ENCODE measurements at regions of chr1 and their contacts with region 1.

Region 1: GRCh38 chr1:111507411-111508201 is 4.2 kb upstream of the ADORA3 start:
- DNase-seq: peak; percentile 32
- H3K4me3 ChIP-seq: peak overlapping the region; percentile 41
- H3K27ac ChIP-seq: peak overlapping the region; percentile 91
- H3K27me3 ChIP-seq: peaks cover 4% of the 10 kb centered on the region
- CTCF ChIP-seq: peak; percentile 28; the same call in 1 of the 2 replicates

Region 2: DNA sequence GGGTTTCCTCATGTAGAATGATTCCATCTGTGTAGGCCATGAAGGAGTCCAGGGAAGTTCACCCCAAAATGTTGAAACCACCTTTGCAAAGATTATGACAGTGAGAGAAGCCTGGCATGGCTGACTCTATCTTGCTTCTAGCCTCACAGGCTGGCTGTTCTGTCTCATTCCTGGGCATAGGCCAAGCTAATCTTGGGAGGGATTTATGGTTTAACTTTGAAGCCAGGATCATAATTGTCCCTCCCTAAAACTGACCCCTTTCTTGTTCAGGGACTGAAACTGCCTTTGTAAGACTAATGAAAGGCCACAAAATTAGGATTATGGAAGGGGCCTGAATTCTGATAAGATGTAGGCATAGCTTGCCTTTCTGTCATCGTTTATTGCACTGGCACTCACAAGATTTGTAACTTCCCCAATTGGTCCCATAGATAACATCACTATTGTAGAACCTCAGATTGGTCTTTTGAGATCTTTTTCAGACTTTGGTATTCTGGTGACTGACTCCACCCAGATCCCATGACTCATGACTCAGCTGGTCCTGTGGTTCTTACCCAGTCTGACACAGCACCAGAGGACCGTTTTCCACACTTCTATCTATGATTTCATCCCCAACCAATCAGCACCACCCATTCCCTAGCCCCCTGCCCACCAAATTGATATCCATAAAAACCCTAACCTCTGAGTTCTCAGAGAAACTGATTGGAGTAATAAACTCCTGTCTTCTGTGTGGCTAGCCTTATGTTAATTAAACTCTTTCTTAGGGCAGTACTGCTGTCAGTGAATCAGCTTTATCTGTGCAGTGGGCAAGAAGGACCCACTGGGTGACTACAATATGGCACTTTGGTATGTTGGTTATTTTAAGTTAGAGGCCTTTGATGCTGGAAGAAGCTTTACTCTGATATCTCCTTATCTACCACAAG is 1086.5 kb before region 1 on chr1:
- CTCF ChIA-PET with region 1: no interaction called
- POLR2A ChIA-PET with region 1: no interaction called
- DNase-seq: no peak
- H3K4me3 ChIP-seq: no peak overlapping the region
- H3K27ac ChIP-seq: no peak overlapping the region
- H3K27me3 ChIP-seq: peaks cover 26% of the 10 kb centered on the region
- CTCF ChIP-seq: no peak

Region 3: DNA sequence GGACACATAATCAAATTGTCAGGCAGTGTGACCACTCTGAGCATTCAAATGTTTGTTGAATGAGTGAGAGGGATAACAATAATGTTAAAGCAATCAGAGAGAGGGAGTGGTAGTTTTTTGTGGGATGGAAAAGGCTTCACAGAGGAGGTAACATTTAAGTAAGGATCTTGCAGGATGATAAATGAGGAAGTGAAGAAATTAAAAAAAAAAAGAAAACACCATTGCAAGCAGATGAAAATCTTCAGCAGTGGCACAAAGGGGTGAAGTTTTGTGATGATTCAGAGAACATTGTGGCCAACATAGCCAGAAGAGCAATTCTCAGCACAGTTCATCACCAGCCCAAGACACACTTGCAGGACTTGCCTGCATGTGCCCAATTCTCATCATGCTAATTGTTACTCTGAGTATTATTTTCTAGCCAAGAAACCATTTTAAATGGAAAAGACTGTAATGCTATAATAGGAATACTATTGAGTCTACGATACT is 115.1 kb before region 1 on chr1:
- CTCF ChIA-PET with region 1: no interaction called
- POLR2A ChIA-PET with region 1: no interaction called
- DNase-seq: no peak
- H3K4me3 ChIP-seq: no peak overlapping the region
- H3K27ac ChIP-seq: no peak overlapping the region
- H3K27me3 ChIP-seq: peaks cover 8% of the 10 kb centered on the region
- CTCF ChIP-seq: no peak

Region 4: DNA sequence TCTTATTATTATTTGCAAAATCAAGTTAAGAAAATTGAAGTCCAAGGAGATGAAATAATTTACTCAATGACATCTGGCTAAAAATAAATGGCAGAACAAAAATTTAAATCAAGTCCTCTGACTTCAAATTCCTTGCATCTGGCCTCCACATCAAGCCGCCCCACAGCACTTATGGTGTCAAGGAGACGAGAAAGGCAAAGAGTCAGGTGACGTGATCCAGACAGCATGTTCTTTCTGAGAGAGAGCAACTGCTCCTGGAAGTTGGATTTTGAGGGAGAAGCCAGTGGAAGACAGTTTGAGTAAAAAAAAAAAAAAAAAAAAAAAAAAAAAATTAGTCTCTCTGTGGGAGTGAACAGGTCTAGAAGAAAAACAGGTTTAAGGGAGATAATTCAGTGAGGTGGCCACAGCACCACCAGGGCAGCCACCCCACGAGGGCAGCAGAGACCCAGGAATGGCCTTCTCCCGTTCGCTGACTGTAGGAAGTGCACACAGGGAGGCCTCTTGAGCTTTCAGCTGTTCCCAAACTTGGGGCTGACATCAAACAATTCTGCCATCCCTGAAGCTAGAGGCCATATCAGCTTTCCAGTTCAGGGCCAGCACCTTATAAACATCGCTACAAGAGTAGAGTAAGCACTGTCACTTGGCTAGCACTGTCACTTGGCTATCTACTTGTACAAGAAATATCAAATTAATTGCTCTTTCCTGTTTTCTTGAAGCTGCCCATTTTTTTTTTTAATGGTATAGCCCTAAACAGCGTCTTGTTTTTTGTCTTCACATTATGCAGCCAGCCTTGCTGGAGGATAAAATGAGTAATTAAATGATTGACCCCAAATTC is 26.0 kb before region 1 on chr1:
- CTCF ChIA-PET with region 1: interaction called, 59 read pairs
- POLR2A ChIA-PET with region 1: interaction called, 6 read pairs
- DNase-seq: peak; percentile 29
- H3K4me3 ChIP-seq: no peak overlapping the region
- H3K27ac ChIP-seq: no peak overlapping the region
- H3K27me3 ChIP-seq: no peaks in the 10 kb centered on the region
- CTCF ChIP-seq: peak; percentile 87

Region 5: DNA sequence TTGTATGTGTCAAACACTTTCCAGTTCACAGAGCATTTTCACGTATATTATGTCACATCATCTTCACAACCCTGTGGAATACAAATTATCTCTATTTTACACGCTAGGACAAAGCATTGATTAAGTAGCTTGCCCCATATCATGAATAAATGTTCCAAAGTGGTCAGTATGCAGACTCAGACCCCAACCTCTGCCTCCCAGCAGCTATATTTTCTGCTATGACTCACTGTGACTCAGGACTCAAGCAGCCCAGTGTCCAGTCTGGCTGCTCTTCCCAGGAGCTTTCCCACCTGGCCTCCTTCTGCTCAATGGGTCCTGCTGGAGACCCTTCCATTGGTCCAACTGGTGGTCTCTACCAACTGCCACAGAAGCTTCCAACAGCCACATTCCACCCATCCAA is 56.0 kb after region 1 on chr1:
- CTCF ChIA-PET with region 1: interaction called, 11 read pairs
- POLR2A ChIA-PET with region 1: interaction called, 4 read pairs
- DNase-seq: peak; percentile 42
- H3K4me3 ChIP-seq: no peak overlapping the region
- H3K27ac ChIP-seq: peak overlapping the region; percentile 47
- H3K27me3 ChIP-seq: no peaks in the 10 kb centered on the region
- CTCF ChIP-seq: no peak

Region 6: DNA sequence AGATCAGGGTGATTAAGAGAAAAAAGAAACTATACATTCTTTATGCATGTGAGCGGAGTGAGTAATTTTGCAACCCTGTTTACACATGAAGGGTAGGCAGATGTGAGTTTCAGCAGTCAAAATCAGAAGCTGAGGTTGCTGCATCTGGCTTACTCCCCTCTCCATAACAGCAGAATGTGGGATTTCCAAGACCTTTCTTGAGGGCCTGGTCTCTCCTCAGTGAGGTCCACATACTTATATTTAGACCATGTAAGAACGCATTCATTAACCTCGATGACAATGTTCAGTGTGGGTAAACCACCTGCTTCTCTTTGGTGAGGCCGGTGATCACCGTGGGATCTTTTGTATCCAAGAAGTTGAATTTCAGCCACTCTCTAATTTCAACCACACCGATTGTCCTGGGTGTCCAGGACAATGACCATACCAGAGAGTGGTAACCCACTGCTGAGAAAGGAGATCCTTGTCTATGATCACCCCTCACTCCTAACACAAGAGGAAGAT is 93.3 kb after region 1 on chr1:
- CTCF ChIA-PET with region 1: interaction called, 11 read pairs
- POLR2A ChIA-PET with region 1: no interaction called
- DNase-seq: no peak
- H3K4me3 ChIP-seq: no peak overlapping the region
- H3K27ac ChIP-seq: no peak overlapping the region
- H3K27me3 ChIP-seq: no peaks in the 10 kb centered on the region
- CTCF ChIP-seq: no peak

Region 7: DNA sequence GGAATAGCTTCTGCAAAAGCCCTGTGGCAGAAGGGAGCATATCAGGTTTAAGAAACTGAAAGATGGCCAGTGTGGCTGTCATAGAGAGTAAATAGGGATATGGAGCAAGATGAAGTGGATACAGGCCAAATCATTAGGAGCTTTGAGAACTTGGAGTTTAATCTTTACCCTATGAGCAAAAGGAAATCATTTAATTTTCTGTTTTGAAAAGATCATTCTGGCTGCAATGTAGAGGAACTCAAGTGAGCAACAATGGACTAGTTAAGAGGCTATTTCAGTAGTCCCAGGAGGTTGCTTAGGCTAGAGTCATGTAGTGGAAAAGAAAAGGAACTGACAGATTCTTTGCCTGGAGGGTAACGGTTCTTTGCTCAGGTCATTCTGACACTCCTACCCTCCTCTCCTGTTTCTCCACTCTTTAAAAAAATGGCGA is 159.2 kb after region 1 on chr1:
- CTCF ChIA-PET with region 1: interaction called, 36 read pairs
- POLR2A ChIA-PET with region 1: no interaction called
- DNase-seq: no peak
- H3K4me3 ChIP-seq: no peak overlapping the region
- H3K27ac ChIP-seq: no peak overlapping the region
- H3K27me3 ChIP-seq: no peaks in the 10 kb centered on the region
- CTCF ChIP-seq: no peak

Region 8: DNA sequence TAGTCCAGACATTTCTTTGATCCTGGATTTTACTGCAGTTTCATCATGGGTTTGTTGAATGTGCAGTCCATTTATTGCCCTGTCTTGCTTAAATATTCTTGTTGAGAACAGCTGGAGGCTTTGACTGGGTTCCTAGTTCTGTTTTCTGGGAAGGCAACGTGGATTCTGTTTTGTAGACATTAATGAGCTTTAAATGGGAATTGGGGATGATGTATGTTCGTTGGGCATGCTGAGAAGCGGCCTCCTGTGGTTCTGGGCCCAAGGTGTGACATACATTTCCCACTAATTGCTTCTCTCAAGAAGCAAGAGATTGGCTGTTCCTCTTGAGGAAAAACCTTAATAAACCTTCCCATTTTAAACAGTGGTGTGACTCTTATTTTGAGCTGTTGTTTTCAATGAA is 208.7 kb after region 1 on chr1:
- CTCF ChIA-PET with region 1: interaction called, 73 read pairs
- POLR2A ChIA-PET with region 1: interaction called, 4 read pairs
- DNase-seq: no peak
- H3K4me3 ChIP-seq: no peak overlapping the region
- H3K27ac ChIP-seq: no peak overlapping the region
- H3K27me3 ChIP-seq: no peaks in the 10 kb centered on the region
- CTCF ChIP-seq: no peak

Region 9: DNA sequence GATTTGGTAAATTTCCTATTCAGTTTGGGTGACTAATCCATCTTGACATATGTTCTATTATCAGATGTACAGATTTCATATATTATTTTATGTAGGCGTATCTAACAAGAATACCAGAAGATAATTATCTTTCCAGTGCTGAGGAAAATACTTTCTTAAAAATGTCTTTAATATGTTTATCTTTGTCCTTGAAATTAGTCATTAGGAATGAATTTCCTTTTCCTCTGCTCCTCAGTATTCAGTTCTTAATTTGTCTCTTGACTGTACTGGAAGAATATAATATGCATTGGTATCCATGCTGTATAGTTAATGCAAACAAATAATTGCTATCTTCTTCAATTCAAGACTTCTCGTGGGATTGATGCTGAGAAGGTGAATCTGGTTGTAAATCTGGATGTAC is 254.7 kb after region 1 on chr1:
- CTCF ChIA-PET with region 1: interaction called, 61 read pairs
- POLR2A ChIA-PET with region 1: no interaction called
- DNase-seq: no peak
- H3K4me3 ChIP-seq: no peak overlapping the region
- H3K27ac ChIP-seq: no peak overlapping the region
- H3K27me3 ChIP-seq: no peaks in the 10 kb centered on the region
- CTCF ChIP-seq: no peak